ENCODE measurements at regions of chr10 and their contacts with region 1.

Region 1: DNA sequence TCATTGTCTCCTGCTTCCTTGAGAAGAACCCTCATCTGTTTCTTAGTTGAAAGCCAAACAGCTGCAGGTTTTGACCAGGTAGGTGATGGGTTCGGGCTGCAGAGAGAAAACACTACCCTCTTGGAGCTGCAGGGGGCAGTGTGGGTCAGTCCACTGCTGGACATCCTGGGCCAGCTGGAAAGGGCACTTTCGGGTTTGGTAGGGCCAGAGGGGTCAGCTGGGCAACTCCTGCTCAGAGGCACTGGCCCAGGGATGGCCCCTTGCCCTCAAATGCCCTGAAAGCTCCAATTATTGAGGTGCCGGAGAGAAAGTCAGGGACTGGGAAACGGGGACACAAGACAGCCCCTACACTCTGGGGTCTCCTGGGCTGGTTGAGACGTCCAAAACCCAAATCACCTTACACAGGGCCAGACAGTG is 90.7 kb downstream of the MKI67 start:
- DNase-seq: peak; percentile 50
- ATAC-seq: peak; percentile 81
- H3K4me3 Mint-ChIP-seq: no peak overlapping the region
- H3K27ac Mint-ChIP-seq: no peak overlapping the region
- H3K4me1 Mint-ChIP-seq: no peaks in the 10 kb centered on the region
- H3K27me3 Mint-ChIP-seq: peaks cover 2% of the 10 kb centered on the region
- CTCF ChIP-seq: peak; percentile 18

Region 2: DNA sequence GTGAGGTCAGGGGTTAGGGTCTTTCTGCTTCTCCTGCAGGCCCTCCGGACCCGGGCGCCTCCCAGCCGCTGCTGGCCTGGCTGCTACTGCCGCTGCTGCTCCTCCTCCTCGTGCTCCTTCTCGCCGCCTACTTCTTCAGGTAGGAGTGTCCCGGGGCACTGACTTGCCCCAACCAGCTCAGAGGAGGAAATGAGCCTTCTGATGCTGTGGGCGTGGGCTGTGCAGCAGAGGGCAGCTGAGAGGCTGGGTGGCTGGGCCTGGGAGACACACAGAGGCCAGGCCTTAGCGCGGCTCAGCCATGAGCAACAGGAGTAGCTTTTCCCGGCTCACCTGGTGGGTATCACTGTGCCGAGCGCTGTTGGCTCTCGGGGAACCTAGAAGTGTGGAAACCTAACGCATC is 11.8 kb after region 1 on chr10:
- CTCF ChIA-PET with region 1: interaction called, 12 read pairs
- POLR2A ChIA-PET with region 1: interaction called, 7 read pairs
- intact Hi-C with region 1: loop called (anchors 1 kb)
- DNase-seq: peak; percentile 61
- ATAC-seq: peak; percentile 100
- H3K4me3 Mint-ChIP-seq: peak overlapping the region; percentile 85
- H3K27ac Mint-ChIP-seq: peak overlapping the region; percentile 81
- H3K4me1 Mint-ChIP-seq: peaks cover 55% of the 10 kb centered on the region
- H3K27me3 Mint-ChIP-seq: no peaks in the 10 kb centered on the region
- CTCF ChIP-seq: no peak

Region 3: DNA sequence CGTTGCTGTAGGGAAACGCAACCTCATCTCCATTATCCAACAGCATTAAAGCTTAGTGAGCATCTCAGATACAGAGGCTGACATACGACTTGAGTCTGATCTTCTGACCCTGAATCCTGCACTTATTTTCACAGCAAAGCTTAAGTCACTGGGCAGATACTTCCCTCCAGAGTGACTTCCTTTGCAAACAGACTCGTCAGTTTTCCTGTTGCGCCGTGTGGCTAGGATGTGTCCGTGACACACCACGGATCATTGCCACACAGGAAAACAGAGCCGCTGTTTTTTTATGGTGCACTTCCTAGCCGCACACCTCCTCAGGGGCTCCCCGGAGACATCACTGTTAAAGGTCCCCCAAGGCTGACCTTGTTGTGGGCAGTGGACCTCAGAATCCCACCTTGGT is 185.6 kb after region 1 on chr10:
- CTCF ChIA-PET with region 1: no interaction called
- POLR2A ChIA-PET with region 1: no interaction called
- intact Hi-C with region 1: no loop called
- DNase-seq: no peak
- ATAC-seq: no peak
- H3K4me3 Mint-ChIP-seq: no peak overlapping the region
- H3K27ac Mint-ChIP-seq: no peak overlapping the region
- H3K4me1 Mint-ChIP-seq: peaks cover 3% of the 10 kb centered on the region
- H3K27me3 Mint-ChIP-seq: peaks cover 8% of the 10 kb centered on the region
- CTCF ChIP-seq: no peak

Measured in activated B cell treated with CpG ODN at 0.5 μM for 24 hours (primary cell).